Body of pancreas (tissue), 4 donors: ENCODE measurements at regions of chr6 and their contacts with region 1.

Region 1: GRCh38 chr6:52577022-52577777 is at the start of gene TRAM2:
- DNase-seq: peak; percentile 84 to 90 (median 84)
- ATAC-seq: peak; percentile 89
- H3K4me3 ChIP-seq: peak within 1 kb of the TSS; percentile 58 to 68
- H3K27ac ChIP-seq: peak within 1 kb of the TSS; percentile 93 to 98 (median 98)
- H3K4me1 ChIP-seq: peaks cover 47% of the 10 kb centered on the region
- H3K27me3 ChIP-seq: no peaks in the 10 kb centered on the region
- CTCF ChIP-seq: peak in 2 of 7 experiments; percentile 15 to 18
- POLR2A ChIP-seq: peak; percentile 68 to 76 (median 73)
- total RNA-seq, gene TRAM2: 6.7 to 7.9 TPM

Region 2: GRCh38 chr6:52650941-52651340 is 73.7 kb after region 1 on chr6:
- intact Hi-C with region 1: loop called (anchors 10 kb)
- DNase-seq: no peak
- ATAC-seq: no peak
- H3K4me3 ChIP-seq: no peak overlapping the region
- H3K27ac ChIP-seq: no peak overlapping the region
- H3K4me1 ChIP-seq: no peaks in the 10 kb centered on the region
- H3K27me3 ChIP-seq: no peaks in the 10 kb centered on the region
- CTCF ChIP-seq: no peak
- POLR2A ChIP-seq: no peak

Region 3: GRCh38 chr6:52739627-52740026 is 162.4 kb after region 1 on chr6:
- intact Hi-C with region 1: no loop called
- DNase-seq: no peak
- ATAC-seq: no peak
- H3K4me3 ChIP-seq: no peak overlapping the region
- H3K27ac ChIP-seq: peak overlapping the region in 3 of 4 donors; percentile 18 to 31 (median 27)
- H3K4me1 ChIP-seq: peaks cover 62% of the 10 kb centered on the region
- H3K27me3 ChIP-seq: no peaks in the 10 kb centered on the region
- CTCF ChIP-seq: no peak
- POLR2A ChIP-seq: no peak

Region 4: GRCh38 chr6:52749556-52750152 is 172.5 kb after region 1 on chr6:
- intact Hi-C with region 1: no loop called
- DNase-seq: no peak
- ATAC-seq: no peak
- H3K4me3 ChIP-seq: no peak overlapping the region
- H3K27ac ChIP-seq: peak overlapping the region in 2 of 4 donors; percentile 31 to 85
- H3K4me1 ChIP-seq: peaks cover 51% of the 10 kb centered on the region
- H3K27me3 ChIP-seq: no peaks in the 10 kb centered on the region
- CTCF ChIP-seq: no peak
- POLR2A ChIP-seq: no peak

Region 5: DNA sequence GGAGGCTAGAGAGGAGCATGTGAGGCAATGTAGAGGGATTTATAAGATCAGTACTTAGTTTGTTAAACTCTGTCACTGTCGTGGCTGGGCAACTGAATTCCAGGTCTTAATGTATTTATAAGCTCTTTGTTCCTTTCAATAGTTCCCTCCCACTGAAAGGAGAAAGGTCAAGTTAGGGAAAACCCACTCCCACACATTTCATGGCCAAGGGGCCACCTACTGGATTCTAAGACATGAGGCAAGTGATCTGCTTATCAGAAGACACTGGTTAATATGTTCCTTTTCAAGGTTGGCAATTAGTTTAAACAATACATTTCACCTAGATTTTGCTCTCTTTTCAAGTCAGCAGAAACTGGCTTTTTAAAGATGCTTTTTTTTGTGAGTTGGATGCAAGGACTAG is 268.8 kb after region 1 on chr6:
- intact Hi-C with region 1: no loop called
- DNase-seq: no peak
- ATAC-seq: peak; percentile 75
- H3K4me3 ChIP-seq: no peak overlapping the region
- H3K27ac ChIP-seq: no peak overlapping the region
- H3K4me1 ChIP-seq: peaks cover 12% of the 10 kb centered on the region
- H3K27me3 ChIP-seq: no peaks in the 10 kb centered on the region
- CTCF ChIP-seq: peak in 1 of 7 experiments; percentile 11
- POLR2A ChIP-seq: no peak

Region 6: DNA sequence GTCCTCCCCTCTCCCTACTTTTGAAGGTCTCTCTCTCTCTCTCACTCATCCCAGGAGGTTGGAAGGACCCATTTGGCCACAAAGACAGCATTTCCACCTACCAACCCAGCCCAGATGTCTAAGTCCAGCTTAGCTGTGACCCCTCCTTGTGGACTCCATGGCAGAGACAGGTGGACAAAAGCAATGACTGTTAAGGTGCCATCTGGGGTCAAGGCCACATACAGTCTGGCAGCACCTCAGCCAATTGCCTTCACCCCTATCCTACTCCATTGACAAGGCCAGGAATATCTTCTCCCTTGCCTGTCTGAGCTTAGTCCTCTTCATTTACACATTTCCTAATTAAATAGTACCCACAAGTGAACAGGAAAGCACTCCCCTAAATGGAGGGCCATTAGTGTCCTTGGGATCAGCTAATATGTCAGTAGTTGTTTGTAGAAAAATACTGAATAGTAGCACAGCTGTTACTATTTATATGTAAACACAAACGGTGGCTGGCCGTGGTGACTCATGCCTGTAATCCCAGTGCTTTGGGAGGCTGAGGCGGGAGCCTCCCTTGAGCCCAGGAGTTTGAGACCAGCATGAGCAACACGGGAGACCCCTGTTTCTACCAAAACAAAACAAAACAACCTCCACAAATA is 542.7 kb after region 1 on chr6:
- intact Hi-C with region 1: no loop called
- DNase-seq: peak; percentile 50 to 65 (median 64)
- ATAC-seq: peak; percentile 71
- H3K4me3 ChIP-seq: no peak overlapping the region
- H3K27ac ChIP-seq: peak overlapping the region in 1 of 4 donors; percentile 46
- H3K4me1 ChIP-seq: peaks cover 10% of the 10 kb centered on the region
- H3K27me3 ChIP-seq: no peaks in the 10 kb centered on the region
- CTCF ChIP-seq: no peak
- POLR2A ChIP-seq: no peak